GM12878 (cell line): ENCODE measurements at regions of chr10 and their contacts with region 1.

Region 1: GRCh38 chr10:14837757-14838581 is at the starts of genes CDNF, HSPA14 and MSANTD7:
- DNase-seq: peak; percentile 98
- ATAC-seq: peak; percentile 98
- H3K4me3 ChIP-seq: peak within 1 kb of the TSS; percentile 92
- H3K27ac ChIP-seq: peak within 1 kb of the TSS; percentile 96
- H3K4me1 ChIP-seq: peaks cover 7% of the 10 kb centered on the region; the same call in 1 of the 2 replicates
- H3K27me3 ChIP-seq: no peaks in the 10 kb centered on the region
- CTCF ChIP-seq: no peak
- EP300 ChIP-seq: no peak
- POLR2A ChIP-seq: peak; percentile 95
- RAD21 ChIP-seq: no peak
- polyA plus RNA-seq, gene CDNF: 0.08 to 0.29 TPM
- polyA plus RNA-seq, gene HSPA14: 44.1 to 46.4 TPM
- polyA plus RNA-seq, gene MSANTD7: 3.5 to 4.5 TPM

Region 2: DNA sequence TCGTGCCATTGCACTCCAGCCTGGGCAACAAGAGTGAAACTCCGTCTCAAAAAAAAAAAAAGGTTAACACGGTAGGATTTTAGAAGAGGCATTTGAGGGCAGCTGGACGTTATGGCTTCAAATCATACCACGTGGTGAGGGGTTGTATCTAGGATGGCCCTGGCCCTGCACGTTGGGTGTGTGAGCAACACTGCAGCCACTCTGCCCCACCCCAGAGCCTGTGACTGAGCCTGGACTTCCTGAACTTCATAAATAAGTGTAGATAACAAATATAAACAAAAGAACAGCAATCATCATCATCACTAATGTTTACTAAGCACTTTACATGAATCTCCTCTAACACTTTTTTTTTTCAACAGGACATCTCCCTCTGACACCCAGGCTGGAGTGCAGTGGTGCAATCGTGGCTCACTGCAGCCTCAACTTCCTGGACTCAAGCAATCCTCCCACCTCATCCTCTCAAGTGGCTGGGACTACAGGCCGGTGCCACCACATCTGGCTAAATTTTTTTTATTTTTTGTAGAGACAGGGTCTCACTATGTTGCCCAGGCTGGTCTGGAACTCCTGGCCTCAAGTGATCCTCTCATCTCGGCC is 337.7 kb before region 1 on chr10:
- CTCF ChIA-PET with region 1: interaction called, 6 read pairs
- POLR2A ChIA-PET with region 1: no interaction called
- RAD21 ChIA-PET with region 1: interaction called, 10 read pairs
- SMC1A ChIA-PET with region 1: interaction called, 5 read pairs
- in situ Hi-C with region 1: no loop called
- intact Hi-C with region 1: loop called (anchors 5 kb)
- DNase-seq: no peak
- ATAC-seq: no peak
- H3K4me3 ChIP-seq: no peak overlapping the region
- H3K27ac ChIP-seq: no peak overlapping the region
- H3K4me1 ChIP-seq: no peaks in the 10 kb centered on the region
- H3K27me3 ChIP-seq: no peaks in the 10 kb centered on the region
- CTCF ChIP-seq: no peak
- EP300 ChIP-seq: no peak
- POLR2A ChIP-seq: no peak
- RAD21 ChIP-seq: no peak

Region 3: DNA sequence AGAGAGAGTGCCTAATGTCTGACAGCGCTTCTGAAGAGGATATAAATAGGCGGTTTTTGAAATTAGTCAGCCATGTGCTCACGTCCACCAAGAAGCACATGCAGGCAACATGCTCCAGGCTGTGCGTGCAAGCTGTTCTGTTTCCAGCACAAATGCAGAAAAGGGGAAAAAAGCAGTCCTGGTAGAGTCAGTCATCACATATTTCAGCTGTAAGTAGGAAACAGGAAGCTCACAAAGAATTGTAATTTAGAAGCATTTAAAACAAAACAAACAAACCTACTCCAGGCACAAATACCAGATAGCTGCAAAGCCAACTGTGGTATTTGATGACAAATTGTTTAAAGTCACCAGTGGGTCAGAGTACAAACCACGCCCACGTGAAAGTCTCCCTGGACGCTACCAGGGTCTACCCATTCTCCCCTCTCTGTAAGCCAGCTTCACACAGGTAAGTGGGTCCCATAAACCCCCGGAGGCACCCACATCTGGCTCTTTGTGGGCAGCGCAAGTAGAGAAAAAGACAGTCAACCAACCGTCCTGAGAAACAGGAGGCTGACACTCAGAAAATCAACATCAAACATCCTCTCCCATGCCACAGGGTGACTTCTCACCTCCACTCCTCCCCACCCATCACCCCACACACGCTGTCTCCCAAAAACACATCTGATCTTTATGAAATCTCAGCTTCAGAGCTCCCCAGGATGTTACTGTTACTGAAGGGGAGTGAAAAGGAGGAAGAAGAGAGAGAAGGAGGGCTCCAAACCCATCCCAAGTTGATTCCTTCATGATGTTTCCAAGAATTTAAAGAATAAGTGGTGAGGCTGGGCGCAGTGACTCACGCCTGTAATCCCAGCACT is 249.7 kb before region 1 on chr10:
- CTCF ChIA-PET with region 1: no interaction called
- POLR2A ChIA-PET with region 1: interaction called, 5 read pairs
- RAD21 ChIA-PET with region 1: interaction called, 5 read pairs
- SMC1A ChIA-PET with region 1: interaction called, 10 read pairs
- in situ Hi-C with region 1: no loop called
- intact Hi-C with region 1: no loop called
- DNase-seq: no peak
- ATAC-seq: peak; percentile 72
- H3K4me3 ChIP-seq: no peak overlapping the region
- H3K27ac ChIP-seq: peak overlapping the region; percentile 64
- H3K4me1 ChIP-seq: peaks cover 56% of the 10 kb centered on the region
- H3K27me3 ChIP-seq: no peaks in the 10 kb centered on the region
- CTCF ChIP-seq: no peak
- EP300 ChIP-seq: peak; percentile 23 to 80; a peak in 3 of 4 replicates
- POLR2A ChIP-seq: no peak
- RAD21 ChIP-seq: no peak

Region 4: GRCh38 chr10:14698111-14698828 is 139.7 kb before region 1 on chr10:
- CTCF ChIA-PET with region 1: no interaction called
- POLR2A ChIA-PET with region 1: no interaction called
- RAD21 ChIA-PET with region 1: no interaction called
- SMC1A ChIA-PET with region 1: no interaction called
- in situ Hi-C with region 1: no loop called
- intact Hi-C with region 1: no loop called
- DNase-seq: no peak
- ATAC-seq: peak; percentile 85
- H3K4me3 ChIP-seq: no peak overlapping the region
- H3K27ac ChIP-seq: no peak overlapping the region
- H3K4me1 ChIP-seq: peaks cover 5% of the 10 kb centered on the region; the same call in 1 of the 2 replicates
- H3K27me3 ChIP-seq: no peaks in the 10 kb centered on the region
- CTCF ChIP-seq: no peak
- EP300 ChIP-seq: no peak
- POLR2A ChIP-seq: no peak
- RAD21 ChIP-seq: no peak

Region 5: DNA sequence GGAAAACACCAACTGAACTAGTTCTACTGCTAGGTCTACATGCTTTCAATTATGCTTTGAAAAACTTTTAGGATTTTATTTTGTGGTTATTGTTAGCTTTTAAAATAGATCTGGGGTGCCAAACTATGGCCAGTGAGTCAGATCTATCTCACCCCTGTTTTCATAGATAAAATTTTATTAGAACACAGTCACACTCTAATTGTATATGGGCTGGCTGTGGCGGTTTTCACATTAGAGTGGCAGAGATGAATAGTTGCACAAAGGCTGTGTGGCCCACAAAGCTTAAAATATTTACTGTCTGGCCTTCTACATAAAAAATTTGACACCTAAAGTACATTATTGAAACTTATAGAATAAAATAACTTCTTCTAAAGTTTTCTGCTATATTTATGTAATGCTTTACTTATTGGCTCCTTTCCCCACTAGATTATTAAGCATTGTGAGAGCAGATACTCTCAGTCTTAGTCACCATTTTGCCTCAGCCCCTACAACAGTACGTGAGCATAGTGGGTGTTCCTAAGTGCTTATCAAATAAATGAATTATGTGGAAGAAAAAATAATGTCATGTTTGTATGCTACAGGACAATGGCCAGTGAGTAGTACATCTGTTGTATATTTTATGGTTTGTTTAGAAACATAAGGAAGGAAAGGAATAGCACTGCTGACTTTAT is 35.3 kb after region 1 on chr10:
- CTCF ChIA-PET with region 1: interaction called, 14 read pairs
- POLR2A ChIA-PET with region 1: interaction called, 18 read pairs
- RAD21 ChIA-PET with region 1: interaction called, 24 read pairs
- SMC1A ChIA-PET with region 1: interaction called, 14 read pairs
- in situ Hi-C with region 1: no loop called
- intact Hi-C with region 1: loop called (anchors 5 kb)
- DNase-seq: no peak
- ATAC-seq: peak; percentile 76
- H3K4me3 ChIP-seq: no peak overlapping the region
- H3K27ac ChIP-seq: peak overlapping the region; percentile 44; the same call in 1 of the 2 replicates
- H3K4me1 ChIP-seq: peaks cover 3% of the 10 kb centered on the region
- H3K27me3 ChIP-seq: no peaks in the 10 kb centered on the region
- CTCF ChIP-seq: no peak
- EP300 ChIP-seq: no peak
- POLR2A ChIP-seq: no peak
- RAD21 ChIP-seq: no peak

Region 6: GRCh38 chr10:14889318-14889717 is 51.3 kb after region 1 on chr10:
- CTCF ChIA-PET with region 1: interaction called, 16 read pairs
- POLR2A ChIA-PET with region 1: no interaction called
- RAD21 ChIA-PET with region 1: no interaction called
- SMC1A ChIA-PET with region 1: interaction called, 3 read pairs
- in situ Hi-C with region 1: no loop called
- intact Hi-C with region 1: no loop called
- DNase-seq: no peak
- ATAC-seq: peak; percentile 71
- H3K4me3 ChIP-seq: no peak overlapping the region
- H3K27ac ChIP-seq: no peak overlapping the region
- H3K4me1 ChIP-seq: no peaks in the 10 kb centered on the region
- H3K27me3 ChIP-seq: no peaks in the 10 kb centered on the region
- CTCF ChIP-seq: peak; percentile 28 to 43 (median 39); a peak in 4 of 6 replicates
- EP300 ChIP-seq: no peak
- POLR2A ChIP-seq: no peak
- RAD21 ChIP-seq: peak; percentile 33

Region 7: DNA sequence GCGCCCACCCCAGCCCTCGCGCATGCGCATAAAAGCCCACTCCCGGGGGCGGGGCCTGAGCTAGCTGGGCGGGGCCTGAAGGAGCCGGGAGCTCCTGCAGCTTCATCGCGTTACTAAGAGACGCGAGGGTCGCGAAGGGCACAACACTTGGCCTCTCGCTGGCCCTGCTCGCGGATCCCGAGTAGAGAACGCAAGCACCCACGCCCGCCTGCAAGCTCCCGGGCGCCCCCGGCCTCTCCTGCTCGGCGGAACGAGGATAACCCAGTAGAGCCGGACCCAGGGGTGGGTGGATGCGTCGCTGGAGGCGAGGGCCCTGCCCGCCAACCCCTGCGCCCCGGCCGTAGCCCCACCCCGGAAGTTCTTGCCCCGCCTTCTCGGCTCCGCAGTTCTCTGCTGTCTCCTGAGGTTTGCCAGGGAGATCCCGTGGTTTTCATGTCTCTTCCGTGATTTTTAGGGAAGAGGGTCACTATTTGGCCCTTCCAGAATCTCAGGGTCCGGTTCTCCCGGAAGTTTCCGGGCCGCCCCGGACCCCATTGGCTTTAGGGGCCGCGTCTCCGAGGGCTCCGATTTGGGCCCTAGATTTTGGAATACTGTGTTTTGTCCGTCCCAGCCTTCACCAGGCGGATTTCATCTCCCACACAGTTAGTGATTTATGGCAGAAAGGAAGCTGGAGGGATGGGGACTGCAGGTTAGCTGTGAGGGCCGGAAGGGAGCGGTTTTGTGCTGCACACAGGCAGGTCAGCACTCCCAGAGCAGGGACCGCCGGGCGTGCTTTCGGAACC is 121.5 kb after region 1 on chr10 and contains the start of gene MEIG1:
- CTCF ChIA-PET with region 1: no interaction called
- POLR2A ChIA-PET with region 1: interaction called, 9 read pairs
- RAD21 ChIA-PET with region 1: interaction called, 15 read pairs
- SMC1A ChIA-PET with region 1: interaction called, 3 read pairs
- in situ Hi-C with region 1: no loop called
- intact Hi-C with region 1: loop called (anchors 5 kb)
- DNase-seq: peak; percentile 60
- ATAC-seq: peak; percentile 93
- H3K4me3 ChIP-seq: peak within 1 kb of the TSS; percentile 72
- H3K27ac ChIP-seq: peak within 1 kb of the TSS; percentile 94
- H3K4me1 ChIP-seq: peaks cover 5% of the 10 kb centered on the region
- H3K27me3 ChIP-seq: no peaks in the 10 kb centered on the region
- CTCF ChIP-seq: no peak
- EP300 ChIP-seq: 0 out of 4 replicates have a peak, but pooled peaks of 1 of the 2 experiments have one; percentile 8
- POLR2A ChIP-seq: peak; percentile 22
- RAD21 ChIP-seq: no peak
- polyA plus RNA-seq, gene MEIG1: 0.79 to 0.80 TPM